ENCODE measurements at regions of chr2 and their contacts with region 1.

Region 1: GRCh38 chr2:24957221-24957620 is 14.5 kb downstream of the DNAJC27 start:
- DNase-seq: no peak
- ATAC-seq: no peak
- H3K4me3 ChIP-seq: no peak overlapping the region
- H3K27ac ChIP-seq: no peak overlapping the region
- H3K4me1 ChIP-seq: no peaks in the 10 kb centered on the region
- H3K27me3 ChIP-seq: no peaks in the 10 kb centered on the region
- CTCF ChIP-seq: no peak
- EP300 ChIP-seq: no peak
- POLR2A ChIP-seq: no peak
- RAD21 ChIP-seq: no peak

Region 2: DNA sequence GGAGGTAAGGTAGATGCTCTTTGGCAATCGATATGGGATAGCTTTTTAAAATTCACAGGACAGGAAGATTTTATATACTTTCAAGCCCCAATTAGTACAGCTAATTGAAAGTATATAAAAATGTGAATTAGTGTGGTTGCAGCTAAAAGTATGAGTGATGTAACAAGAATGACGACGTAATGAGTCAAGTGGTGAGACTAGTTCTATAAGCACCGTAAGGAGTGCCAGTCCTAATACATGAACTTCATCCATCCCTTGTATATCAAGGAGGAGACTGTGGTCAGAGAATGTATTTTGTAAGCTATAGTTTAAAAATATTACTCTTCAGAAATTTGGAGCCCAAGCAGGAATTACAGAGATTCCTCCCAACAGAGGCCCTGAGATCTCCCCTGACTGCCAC is 11.3 kb before region 1 on chr2:
- CTCF ChIA-PET with region 1: no interaction called
- POLR2A ChIA-PET with region 1: interaction called, 18 read pairs
- in situ Hi-C with region 1: no loop called
- intact Hi-C with region 1: no loop called
- DNase-seq: no peak
- ATAC-seq: no peak
- H3K4me3 ChIP-seq: no peak overlapping the region
- H3K27ac ChIP-seq: no peak overlapping the region
- H3K4me1 ChIP-seq: no peaks in the 10 kb centered on the region
- H3K27me3 ChIP-seq: no peaks in the 10 kb centered on the region
- CTCF ChIP-seq: no peak
- EP300 ChIP-seq: no peak
- POLR2A ChIP-seq: no peak
- RAD21 ChIP-seq: no peak